H1 (cell line): ENCODE measurements at regions of chr18 and their contacts with region 1.

Region 1: DNA sequence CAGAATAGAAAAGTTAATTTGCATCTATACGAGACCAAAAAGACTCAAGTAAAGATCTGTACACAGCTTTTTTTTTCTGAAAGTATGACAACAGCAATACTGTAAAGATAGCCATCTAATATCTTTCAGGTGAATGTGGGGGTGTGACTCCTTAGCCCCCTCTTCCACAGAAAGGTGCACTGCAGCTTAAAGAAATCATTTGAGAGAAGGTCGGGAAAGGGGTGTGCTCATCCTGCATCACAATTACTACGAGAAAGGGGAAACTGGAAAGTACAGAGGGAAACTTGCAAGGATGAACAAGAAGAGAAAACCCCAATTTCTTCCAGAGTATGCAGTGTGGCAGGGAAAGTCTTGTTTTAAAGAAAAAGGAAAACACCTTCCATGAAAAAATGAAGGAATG is 255.6 kb downstream of the CCDC178 start:
- DNase-seq: no peak
- H3K4me3 ChIP-seq: no peak overlapping the region
- H3K27ac ChIP-seq: no peak overlapping the region
- H3K4me1 ChIP-seq: no peaks in the 10 kb centered on the region
- H3K27me3 ChIP-seq: no peaks in the 10 kb centered on the region
- CTCF ChIP-seq: peak in 2 of 3 experiments; percentile 32 to 52; a peak in 2 of 4 replicates
- EP300 ChIP-seq: no peak
- POLR2A ChIP-seq: no peak
- RAD21 ChIP-seq: peak; percentile 38 to 45; a peak in 3 of 4 replicates

Region 2: DNA sequence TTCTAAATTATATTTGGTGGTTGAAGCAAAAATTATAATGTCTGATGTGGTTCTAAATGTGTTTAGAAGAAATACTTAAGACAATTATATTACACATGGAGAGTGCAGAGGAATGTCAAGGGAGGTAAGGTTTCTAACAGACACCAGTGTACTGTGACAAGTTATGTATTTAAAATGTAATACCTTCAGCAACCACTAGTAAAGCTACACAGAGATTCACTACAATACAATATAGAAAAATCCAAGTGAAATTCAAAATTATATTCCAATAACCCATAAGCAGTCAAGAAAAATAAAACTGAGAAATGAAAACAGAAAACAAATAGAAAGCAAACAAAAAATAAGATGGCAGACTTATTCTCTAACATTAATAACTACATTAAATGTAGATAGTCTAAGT is 162.6 kb before region 1 on chr18:
- CTCF ChIA-PET with region 1: no interaction called
- POLR2A ChIA-PET with region 1: no interaction called
- DNase-seq: no peak
- H3K4me3 ChIP-seq: no peak overlapping the region
- H3K27ac ChIP-seq: no peak overlapping the region
- H3K4me1 ChIP-seq: no peaks in the 10 kb centered on the region
- H3K27me3 ChIP-seq: no peaks in the 10 kb centered on the region
- CTCF ChIP-seq: peak in 1 of 3 experiments; percentile 5; a peak in 1 of 4 replicates
- EP300 ChIP-seq: no peak
- POLR2A ChIP-seq: no peak
- RAD21 ChIP-seq: no peak

Region 3: DNA sequence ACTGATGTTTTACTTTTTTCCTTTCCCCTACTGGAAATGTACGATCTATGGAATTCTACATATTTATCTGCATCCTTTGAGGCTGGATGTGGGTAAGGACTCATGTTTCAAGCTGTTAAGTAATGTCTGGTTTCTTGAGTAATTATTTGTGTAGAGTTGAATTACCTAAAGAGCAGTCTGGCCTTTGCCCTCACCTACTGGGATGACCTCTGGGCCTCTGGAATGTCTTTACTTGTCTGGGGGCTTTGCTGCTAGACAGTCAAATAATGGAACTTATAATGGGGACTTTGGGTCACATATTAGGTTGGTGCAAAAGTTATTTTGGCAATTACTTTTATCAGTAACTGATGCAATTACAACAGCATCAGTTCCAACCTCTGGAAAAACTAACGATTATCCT is 10.8 kb after region 1 on chr18:
- CTCF ChIA-PET with region 1: interaction called, 15 read pairs
- POLR2A ChIA-PET with region 1: no interaction called
- DNase-seq: no peak
- H3K4me3 ChIP-seq: no peak overlapping the region
- H3K27ac ChIP-seq: no peak overlapping the region
- H3K4me1 ChIP-seq: no peaks in the 10 kb centered on the region
- H3K27me3 ChIP-seq: no peaks in the 10 kb centered on the region
- CTCF ChIP-seq: no peak
- EP300 ChIP-seq: no peak
- POLR2A ChIP-seq: no peak
- RAD21 ChIP-seq: no peak

Region 4: GRCh38 chr18:33201509-33201926 is 16.6 kb after region 1 on chr18:
- CTCF ChIA-PET with region 1: interaction called, 15 read pairs
- POLR2A ChIA-PET with region 1: no interaction called
- DNase-seq: peak; percentile 5 to 74
- H3K4me3 ChIP-seq: peak overlapping the region in 1 of 4 experiments; percentile 39; a peak in 3 of 8 replicates
- H3K27ac ChIP-seq: no peak overlapping the region
- H3K4me1 ChIP-seq: no peaks in the 10 kb centered on the region; a peak in 1 of 7 replicates
- H3K27me3 ChIP-seq: no peaks in the 10 kb centered on the region
- CTCF ChIP-seq: peak; percentile 7 to 84 (median 70)
- EP300 ChIP-seq: no peak
- POLR2A ChIP-seq: no peak
- RAD21 ChIP-seq: peak; percentile 40 to 58